ENCODE measurements at regions of chr3 and their contacts with region 1.

Region 1: GRCh38 chr3:128617557-128618397 is 32.8 kb downstream of the RPN1 start:
- DNase-seq: peak; percentile 99
- ATAC-seq: peak; percentile 94
- H3K4me3 Mint-ChIP-seq: peak overlapping the region; percentile 85
- H3K27ac Mint-ChIP-seq: peak overlapping the region; percentile 88
- H3K4me1 Mint-ChIP-seq: peaks cover 46% of the 10 kb centered on the region
- H3K27me3 Mint-ChIP-seq: no peaks in the 10 kb centered on the region

Region 2: GRCh38 chr3:128360705-128361271 is 257.0 kb before region 1 on chr3:
- CTCF ChIA-PET with region 1: no interaction called
- POLR2A ChIA-PET with region 1: no interaction called
- DNase-seq: no peak
- ATAC-seq: no peak
- H3K4me3 Mint-ChIP-seq: no peak overlapping the region
- H3K27ac Mint-ChIP-seq: no peak overlapping the region
- H3K4me1 Mint-ChIP-seq: no peaks in the 10 kb centered on the region
- H3K27me3 Mint-ChIP-seq: no peaks in the 10 kb centered on the region

Region 3: GRCh38 chr3:128607710-128608048 is 10.1 kb before region 1 on chr3:
- CTCF ChIA-PET with region 1: interaction called, 23 read pairs
- POLR2A ChIA-PET with region 1: interaction called, 3 read pairs
- DNase-seq: no peak
- ATAC-seq: no peak
- H3K4me3 Mint-ChIP-seq: no peak overlapping the region
- H3K27ac Mint-ChIP-seq: no peak overlapping the region
- H3K4me1 Mint-ChIP-seq: no peaks in the 10 kb centered on the region
- H3K27me3 Mint-ChIP-seq: peaks cover 5% of the 10 kb centered on the region

Region 4: DNA sequence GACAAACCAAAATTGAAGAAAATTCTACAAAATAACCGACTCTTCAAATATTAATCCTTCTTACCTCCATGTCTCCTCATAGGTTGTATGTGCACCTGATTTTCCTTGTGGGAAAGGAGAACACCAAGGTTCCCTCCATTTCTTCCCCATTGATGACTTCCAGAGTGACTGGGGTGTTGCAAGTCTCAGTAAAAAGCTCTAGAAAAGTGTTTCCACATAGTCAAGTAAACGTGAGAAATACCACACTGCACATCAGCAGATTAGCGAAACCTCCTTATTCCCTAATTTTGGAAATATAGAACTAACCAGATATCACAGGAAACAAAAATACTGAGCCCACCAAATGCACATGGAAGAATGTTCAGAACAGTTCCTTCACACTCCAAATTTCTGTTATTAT is 37.8 kb after region 1 on chr3:
- CTCF ChIA-PET with region 1: interaction called, 11 read pairs
- POLR2A ChIA-PET with region 1: interaction called, 13 read pairs
- DNase-seq: no peak
- ATAC-seq: no peak
- H3K4me3 Mint-ChIP-seq: no peak overlapping the region
- H3K27ac Mint-ChIP-seq: no peak overlapping the region
- H3K4me1 Mint-ChIP-seq: peaks cover 13% of the 10 kb centered on the region
- H3K27me3 Mint-ChIP-seq: no peaks in the 10 kb centered on the region

Region 5: DNA sequence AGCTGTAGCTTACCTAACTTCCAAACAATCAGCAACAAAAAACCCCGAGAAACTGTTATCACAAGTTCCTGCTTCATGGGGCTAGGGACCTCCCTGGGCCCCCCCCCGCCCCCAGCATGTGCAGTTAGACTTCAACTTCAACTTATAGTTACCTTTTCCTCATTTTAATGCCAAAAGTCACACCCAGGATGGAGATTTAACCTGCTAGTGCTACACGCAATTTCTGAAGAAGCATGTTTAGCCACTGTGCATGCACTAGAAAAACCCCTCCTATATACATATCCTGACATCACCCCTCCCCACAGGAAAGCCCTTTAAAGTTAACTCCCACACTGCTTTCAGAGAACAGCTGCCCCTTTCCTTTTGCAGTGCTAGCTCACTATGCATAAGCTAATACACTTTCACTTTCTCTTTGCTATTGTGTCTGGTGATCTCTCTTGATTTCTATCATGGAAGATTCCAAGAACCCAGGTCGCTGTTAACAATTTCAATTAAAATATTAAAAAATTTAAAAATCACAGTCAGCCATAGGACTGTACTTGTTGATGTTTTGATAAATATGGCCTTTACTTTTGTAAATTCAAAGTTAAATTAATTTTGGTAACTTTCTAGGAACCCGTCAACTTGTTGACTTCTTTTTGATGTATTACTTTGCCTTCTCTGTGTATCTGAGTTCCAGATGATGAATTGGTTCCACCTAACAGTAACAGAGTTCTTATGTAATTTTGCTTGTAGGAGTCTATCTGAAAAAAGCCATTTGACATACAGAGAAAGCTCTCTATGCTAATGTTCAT is 186.4 kb after region 1 on chr3:
- CTCF ChIA-PET with region 1: interaction called, 24 read pairs
- POLR2A ChIA-PET with region 1: no interaction called
- DNase-seq: peak; percentile 82
- ATAC-seq: peak; percentile 89
- H3K4me3 Mint-ChIP-seq: peak overlapping the region; percentile 71
- H3K27ac Mint-ChIP-seq: peak overlapping the region; percentile 90
- H3K4me1 Mint-ChIP-seq: peaks cover 68% of the 10 kb centered on the region
- H3K27me3 Mint-ChIP-seq: no peaks in the 10 kb centered on the region

Measured in activated CD8-positive, alpha-beta T cell treated with anti-CD3 and anti-CD28 coated beads, Interleukin-2, amount 10 ng/mL, durations not matched to agents 7 days and 5 days (primary cell).